ENCODE measurements at regions of chr3 and their contacts with region 1.

Region 1: GRCh38 chr3:16828815-16829214 is 55.9 kb upstream of the PLCL2 start:
- DNase-seq: peak; percentile 56 to 71 (median 59)
- H3K4me3 ChIP-seq: no peak overlapping the region
- H3K4me3 Mint-ChIP-seq: no peak overlapping the region
- H3K27ac ChIP-seq: no peak overlapping the region
- H3K27ac Mint-ChIP-seq: peak overlapping the region in 2 of 7 donors; percentile 20 to 32
- H3K4me1 ChIP-seq: peaks cover 14% of the 10 kb centered on the region
- H3K4me1 Mint-ChIP-seq: peaks cover 18 to 28% (median 26%) of the 10 kb centered on the region in 4 donors
- H3K27me3 ChIP-seq: no peaks in the 10 kb centered on the region
- H3K27me3 Mint-ChIP-seq: no peaks in the 10 kb centered on the region

Region 2: GRCh38 chr3:16808393-16809107 is 20.3 kb before region 1 on chr3:
- CTCF ChIA-PET with region 1: interaction called, 10 read pairs
- POLR2A ChIA-PET with region 1: interaction called, 4 read pairs
- intact Hi-C with region 1: no loop called
- DNase-seq: no peak
- H3K4me3 ChIP-seq: no peak overlapping the region
- H3K4me3 Mint-ChIP-seq: no peak overlapping the region
- H3K27ac ChIP-seq: no peak overlapping the region
- H3K27ac Mint-ChIP-seq: peak overlapping the region in 1 of 7 donors; percentile 35
- H3K4me1 ChIP-seq: peaks cover 16% of the 10 kb centered on the region
- H3K4me1 Mint-ChIP-seq: peaks cover 19 to 35% (median 26%) of the 10 kb centered on the region in 4 donors
- H3K27me3 ChIP-seq: no peaks in the 10 kb centered on the region
- H3K27me3 Mint-ChIP-seq: peaks cover 0 to 2% of the 10 kb centered on the region in 2 donors

Region 3: DNA sequence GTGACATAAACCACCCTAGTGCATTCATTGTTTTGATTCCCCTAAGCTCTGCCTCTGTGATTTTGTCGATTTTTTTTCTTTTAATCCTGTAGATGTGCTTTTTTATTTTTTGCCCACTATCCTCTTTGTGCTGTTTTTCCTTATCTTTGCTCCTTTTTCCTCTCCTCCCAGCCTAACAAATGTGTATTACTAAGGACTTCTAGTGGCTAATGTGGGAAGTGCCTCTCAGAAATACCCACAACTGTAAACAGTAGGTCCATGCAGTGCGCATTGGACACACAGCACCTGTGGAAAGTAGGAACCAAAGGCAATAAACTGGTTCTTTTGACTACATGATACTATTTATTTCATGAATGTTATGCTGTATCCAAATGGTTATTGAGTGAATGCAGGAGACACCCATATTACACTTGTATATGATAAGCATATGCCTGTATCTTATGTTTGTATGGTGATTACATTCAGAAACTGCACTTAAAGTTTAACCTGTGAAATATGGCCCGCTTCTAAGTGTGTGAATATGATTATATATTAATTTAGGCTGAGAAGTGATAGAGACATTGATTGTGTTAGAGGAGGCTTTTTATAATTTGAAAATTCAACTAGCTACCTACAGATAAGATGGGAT is 203.7 kb after region 1 on chr3:
- CTCF ChIA-PET with region 1: interaction called, 5 read pairs
- POLR2A ChIA-PET with region 1: no interaction called
- intact Hi-C with region 1: loop called (anchors 5 kb)
- DNase-seq: no peak
- H3K4me3 ChIP-seq: no peak overlapping the region
- H3K4me3 Mint-ChIP-seq: no peak overlapping the region
- H3K27ac ChIP-seq: no peak overlapping the region
- H3K27ac Mint-ChIP-seq: peak overlapping the region in 2 of 7 donors; percentile 5 to 28
- H3K4me1 ChIP-seq: peaks cover 35% of the 10 kb centered on the region
- H3K4me1 Mint-ChIP-seq: peaks cover 46 to 84% (median 68%) of the 10 kb centered on the region in 4 donors
- H3K27me3 ChIP-seq: no peaks in the 10 kb centered on the region
- H3K27me3 Mint-ChIP-seq: no peaks in the 10 kb centered on the region